ENCODE measurements at regions of chr20 and their contacts with region 1.

Region 1: DNA sequence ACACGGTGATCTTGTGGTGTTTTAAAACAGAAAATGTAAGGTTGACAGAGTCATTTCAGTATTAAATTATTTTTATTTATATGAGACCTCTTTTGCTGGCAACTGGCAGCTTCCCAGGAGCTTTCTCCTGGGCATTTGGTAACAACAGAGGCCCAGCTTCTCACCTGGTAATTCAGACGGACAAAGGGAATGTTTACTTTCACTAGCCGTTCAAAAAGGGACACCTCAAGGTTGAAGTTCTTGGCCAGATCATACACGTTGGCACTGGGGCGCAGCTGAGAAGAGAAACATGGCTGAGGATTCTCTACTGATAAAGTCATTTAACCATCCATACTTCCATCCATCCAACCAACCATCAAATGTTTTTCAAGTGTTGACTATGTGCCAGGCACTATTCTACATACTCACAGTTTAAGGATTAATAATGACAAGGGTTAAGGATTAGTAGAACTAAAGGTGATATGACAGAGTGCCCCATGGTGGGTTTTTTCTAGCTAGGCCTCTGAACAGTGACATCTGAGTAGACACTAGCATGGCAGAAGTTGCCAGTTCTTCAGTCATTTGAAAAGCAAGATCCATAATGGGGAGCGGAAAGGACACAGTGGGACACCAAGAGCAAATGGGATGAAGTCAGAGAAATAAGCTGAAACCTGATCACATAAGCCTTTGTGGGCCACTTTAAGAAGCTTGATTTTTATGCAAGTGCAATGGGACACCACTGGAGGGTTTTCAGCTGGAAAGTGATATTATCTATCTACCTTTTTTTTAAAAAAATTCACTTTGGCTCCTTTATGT is 25.1 kb downstream of the ZNFX1 start:
- DNase-seq: no peak
- H3K4me3 Mint-ChIP-seq: no peak overlapping the region
- H3K27ac Mint-ChIP-seq: no peak overlapping the region
- H3K4me1 Mint-ChIP-seq: peaks cover 2% of the 10 kb centered on the region
- H3K27me3 Mint-ChIP-seq: no peaks in the 10 kb centered on the region

Region 2: GRCh38 chr20:49267327-49267726 is 14.6 kb after region 1 on chr20:
- CTCF ChIA-PET with region 1: interaction called, 18 read pairs
- POLR2A ChIA-PET with region 1: no interaction called
- DNase-seq: no peak
- H3K4me3 Mint-ChIP-seq: peak overlapping the region; percentile 71
- H3K27ac Mint-ChIP-seq: peak overlapping the region; percentile 81
- H3K4me1 Mint-ChIP-seq: peaks cover 64% of the 10 kb centered on the region
- H3K27me3 Mint-ChIP-seq: no peaks in the 10 kb centered on the region

Measured in activated CD4-positive, alpha-beta T cell treated with anti-CD3 and anti-CD28 coated beads, Interleukin-2, amount 10 ng/mL, durations not matched to agents 7 days and 5 days (primary cell).